Naive thymus-derived CD4-positive, alpha-beta T cell (primary cell): ENCODE measurements at regions of chr2 and their contacts with region 1.

Region 1: GRCh38 chr2:19347619-19348562 is 10.5 kb downstream of the OSR1 start:
- DNase-seq: peak; percentile 97 to 100 (median 99)
- ATAC-seq: peak; percentile 94
- H3K4me3 ChIP-seq: peak overlapping the region; percentile 85
- H3K4me3 Mint-ChIP-seq: peak overlapping the region; percentile 90 to 99 (median 96)
- H3K27ac ChIP-seq: peak overlapping the region; percentile 90
- H3K27ac Mint-ChIP-seq: peak overlapping the region; percentile 92 to 100 (median 98)
- H3K4me1 ChIP-seq: peaks cover 11 to 22% of the 10 kb centered on the region in 2 donors
- H3K4me1 Mint-ChIP-seq: peaks cover 19 to 45% (median 34%) of the 10 kb centered on the region in 7 donors
- H3K27me3 ChIP-seq: peaks cover 7 to 25% of the 10 kb centered on the region in 2 donors
- H3K27me3 Mint-ChIP-seq: peaks cover 29 to 41% (median 33%) of the 10 kb centered on the region in 5 donors

Region 2: DNA sequence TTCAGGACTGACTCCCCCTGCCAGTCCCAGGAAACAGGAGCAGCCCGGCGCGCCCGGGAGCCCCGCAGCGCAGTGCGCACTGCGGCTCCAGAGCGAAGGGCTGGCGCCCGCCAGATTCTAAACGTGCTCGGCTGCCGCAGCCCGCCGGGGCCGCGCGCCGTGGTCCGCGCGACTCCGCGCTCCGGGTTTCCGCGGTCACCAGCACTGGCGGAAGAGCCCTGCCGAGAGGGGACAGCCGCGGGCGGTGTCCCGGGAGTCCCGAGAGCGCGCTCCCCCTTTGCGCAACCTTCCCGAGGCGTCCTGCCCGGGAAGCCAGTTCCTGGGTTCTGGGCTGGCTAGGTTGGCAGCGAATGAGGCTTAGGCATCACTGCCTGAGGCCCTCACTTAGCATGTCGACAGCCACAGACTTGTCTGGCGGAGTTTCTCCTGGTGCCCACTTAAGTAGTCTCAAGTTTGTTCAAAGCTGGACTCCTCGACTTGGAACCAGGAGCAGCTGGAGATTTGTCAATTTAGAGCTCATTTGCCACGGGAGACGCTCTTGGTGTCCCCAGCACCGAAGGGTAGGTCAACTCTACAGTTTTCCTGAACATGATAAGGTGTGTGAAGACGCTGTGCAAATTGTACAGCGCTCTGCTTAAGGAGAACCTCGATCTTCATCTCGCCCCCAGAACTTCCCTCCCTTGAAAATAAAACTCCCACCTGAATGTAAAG is 1808.9 kb before region 1 on chr2:
- CTCF ChIA-PET with region 1: no interaction called
- POLR2A ChIA-PET with region 1: no interaction called
- intact Hi-C with region 1: loop called in 1 of 2 experiments (anchors 10 kb)
- DNase-seq: no peak
- ATAC-seq: no peak
- H3K4me3 ChIP-seq: no peak overlapping the region
- H3K4me3 Mint-ChIP-seq: no peak overlapping the region
- H3K27ac ChIP-seq: no peak overlapping the region
- H3K27ac Mint-ChIP-seq: no peak overlapping the region
- H3K4me1 ChIP-seq: no peaks in the 10 kb centered on the region
- H3K4me1 Mint-ChIP-seq: peaks cover 0 to 12% (median 4%) of the 10 kb centered on the region in 7 donors
- H3K27me3 ChIP-seq: peaks cover 0 to 6% of the 10 kb centered on the region in 2 donors
- H3K27me3 Mint-ChIP-seq: peaks cover 67 to 76% (median 75%) of the 10 kb centered on the region in 5 donors

Region 3: GRCh38 chr2:19331450-19331849 is 16.4 kb before region 1 on chr2:
- CTCF ChIA-PET with region 1: no interaction called
- POLR2A ChIA-PET with region 1: no interaction called
- intact Hi-C with region 1: no loop called
- DNase-seq: no peak
- ATAC-seq: no peak
- H3K4me3 ChIP-seq: no peak overlapping the region
- H3K4me3 Mint-ChIP-seq: no peak overlapping the region
- H3K27ac ChIP-seq: no peak overlapping the region
- H3K27ac Mint-ChIP-seq: no peak overlapping the region
- H3K4me1 ChIP-seq: no peaks in the 10 kb centered on the region
- H3K4me1 Mint-ChIP-seq: no peaks in the 10 kb centered on the region
- H3K27me3 ChIP-seq: no peaks in the 10 kb centered on the region
- H3K27me3 Mint-ChIP-seq: peaks cover 0 to 4% (median 0%) of the 10 kb centered on the region in 5 donors

Region 4: DNA sequence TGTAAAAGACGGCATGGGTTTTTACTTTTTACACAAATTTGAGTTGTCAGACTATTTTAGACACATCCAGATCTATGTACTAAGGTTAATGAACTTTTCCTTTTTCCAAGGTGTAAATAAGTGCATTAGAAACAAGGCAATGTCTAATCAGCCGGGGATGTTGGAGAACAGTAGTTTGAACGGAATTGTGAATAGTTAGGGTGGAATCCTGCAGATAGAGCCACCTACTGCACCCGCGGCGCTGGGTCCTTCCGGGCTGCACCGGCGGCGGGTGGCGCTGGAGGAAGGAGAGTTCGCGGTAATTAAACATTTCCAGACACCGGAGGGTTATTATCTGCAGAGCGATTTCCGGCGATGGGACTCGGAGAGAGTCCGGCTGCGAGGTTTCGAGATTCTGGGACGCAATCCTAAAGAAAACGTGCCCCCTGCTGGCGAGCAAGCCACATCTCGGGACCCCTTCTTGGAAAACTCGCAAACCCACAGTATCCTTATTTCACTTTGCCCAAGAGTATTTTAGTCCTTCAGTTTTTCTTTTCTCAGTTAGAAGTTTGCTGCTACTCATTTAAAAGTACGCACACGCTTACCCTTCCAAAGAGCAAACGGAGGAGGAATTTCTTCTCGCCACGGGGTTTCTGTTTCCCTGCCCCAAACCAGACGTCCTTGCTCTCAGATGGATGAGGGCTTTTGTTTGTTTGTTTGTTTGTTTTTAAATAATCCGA is 15.0 kb after region 1 on chr2:
- CTCF ChIA-PET with region 1: interaction called, 5 read pairs
- POLR2A ChIA-PET with region 1: interaction called, 27 read pairs
- intact Hi-C with region 1: loop called (anchors 1 kb)
- DNase-seq: peak in 3 of 9 donors; percentile 41 to 46 (median 44)
- ATAC-seq: peak; percentile 38
- H3K4me3 ChIP-seq: peak overlapping the region; percentile 79
- H3K4me3 Mint-ChIP-seq: peak overlapping the region; percentile 88 to 99 (median 94)
- H3K27ac ChIP-seq: no peak overlapping the region
- H3K27ac Mint-ChIP-seq: peak overlapping the region in 8 of 9 donors; percentile 40 to 90 (median 80)
- H3K4me1 ChIP-seq: peaks cover 7 to 20% of the 10 kb centered on the region in 2 donors
- H3K4me1 Mint-ChIP-seq: peaks cover 19 to 40% (median 35%) of the 10 kb centered on the region in 7 donors
- H3K27me3 ChIP-seq: peaks cover 19 to 30% of the 10 kb centered on the region in 2 donors
- H3K27me3 Mint-ChIP-seq: peaks cover 39 to 97% (median 43%) of the 10 kb centered on the region in 5 donors

Region 5: DNA sequence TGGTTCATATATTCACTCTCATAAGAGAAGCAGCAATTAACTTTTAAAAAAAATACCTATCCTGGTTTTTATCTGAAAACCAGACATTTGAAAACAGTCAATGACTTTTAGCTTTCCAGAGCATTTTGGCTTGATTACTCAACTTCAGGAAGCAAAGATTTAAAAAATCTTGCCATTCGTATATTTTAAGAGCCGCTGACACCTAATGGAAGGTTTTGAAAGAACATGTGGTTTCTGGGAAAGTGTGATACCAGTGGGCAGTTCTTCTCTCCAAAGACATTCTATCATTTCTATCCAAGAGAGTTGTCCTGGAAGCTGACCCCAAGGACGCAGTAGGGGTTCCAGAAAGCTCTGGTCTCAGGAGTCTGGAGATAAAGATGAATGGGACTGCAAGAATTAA is 319.2 kb after region 1 on chr2:
- CTCF ChIA-PET with region 1: no interaction called
- POLR2A ChIA-PET with region 1: no interaction called
- intact Hi-C with region 1: loop called in 1 of 2 experiments (anchors 1 kb)
- DNase-seq: no peak
- ATAC-seq: no peak
- H3K4me3 ChIP-seq: no peak overlapping the region
- H3K4me3 Mint-ChIP-seq: no peak overlapping the region
- H3K27ac ChIP-seq: no peak overlapping the region
- H3K27ac Mint-ChIP-seq: no peak overlapping the region
- H3K4me1 ChIP-seq: no peaks in the 10 kb centered on the region
- H3K4me1 Mint-ChIP-seq: no peaks in the 10 kb centered on the region
- H3K27me3 ChIP-seq: no peaks in the 10 kb centered on the region
- H3K27me3 Mint-ChIP-seq: peaks cover 0 to 32% (median 17%) of the 10 kb centered on the region in 5 donors

Region 6: GRCh38 chr2:19901442-19902215 is 553.7 kb after region 1 on chr2 and contains the start of gene TTC32:
- CTCF ChIA-PET with region 1: no interaction called
- POLR2A ChIA-PET with region 1: interaction called, 8 read pairs
- intact Hi-C with region 1: loop called (anchors 1 kb)
- DNase-seq: peak; percentile 90 to 98 (median 96)
- ATAC-seq: peak; percentile 91
- H3K4me3 ChIP-seq: peak within 1 kb of the TSS; percentile 95
- H3K4me3 Mint-ChIP-seq: peak within 1 kb of the TSS; percentile 84 to 99 (median 96)
- H3K27ac ChIP-seq: peak within 1 kb of the TSS; percentile 83
- H3K27ac Mint-ChIP-seq: peak within 1 kb of the TSS; percentile 93 to 100 (median 99)
- H3K4me1 ChIP-seq: peaks cover 15 to 23% of the 10 kb centered on the region in 2 donors
- H3K4me1 Mint-ChIP-seq: peaks cover 24 to 35% (median 31%) of the 10 kb centered on the region in 7 donors
- H3K27me3 ChIP-seq: no peaks in the 10 kb centered on the region
- H3K27me3 Mint-ChIP-seq: peaks cover 8 to 19% (median 13%) of the 10 kb centered on the region in 5 donors
- total RNA-seq, gene TTC32: 23.1 to 58.0 (median 44.9) TPM

Region 7: GRCh38 chr2:20097879-20098714 is 750.2 kb after region 1 on chr2:
- CTCF ChIA-PET with region 1: no interaction called
- POLR2A ChIA-PET with region 1: no interaction called
- intact Hi-C with region 1: loop called in 1 of 2 experiments (anchors 5 kb)
- DNase-seq: peak; percentile 58 to 73 (median 67)
- ATAC-seq: peak; percentile 94
- H3K4me3 ChIP-seq: no peak overlapping the region
- H3K4me3 Mint-ChIP-seq: no peak overlapping the region
- H3K27ac ChIP-seq: no peak overlapping the region
- H3K27ac Mint-ChIP-seq: no peak overlapping the region
- H3K4me1 ChIP-seq: no peaks in the 10 kb centered on the region
- H3K4me1 Mint-ChIP-seq: peaks cover 0 to 4% (median 0%) of the 10 kb centered on the region in 7 donors
- H3K27me3 ChIP-seq: no peaks in the 10 kb centered on the region
- H3K27me3 Mint-ChIP-seq: peaks cover 12 to 21% (median 13%) of the 10 kb centered on the region in 5 donors

Region 8: DNA sequence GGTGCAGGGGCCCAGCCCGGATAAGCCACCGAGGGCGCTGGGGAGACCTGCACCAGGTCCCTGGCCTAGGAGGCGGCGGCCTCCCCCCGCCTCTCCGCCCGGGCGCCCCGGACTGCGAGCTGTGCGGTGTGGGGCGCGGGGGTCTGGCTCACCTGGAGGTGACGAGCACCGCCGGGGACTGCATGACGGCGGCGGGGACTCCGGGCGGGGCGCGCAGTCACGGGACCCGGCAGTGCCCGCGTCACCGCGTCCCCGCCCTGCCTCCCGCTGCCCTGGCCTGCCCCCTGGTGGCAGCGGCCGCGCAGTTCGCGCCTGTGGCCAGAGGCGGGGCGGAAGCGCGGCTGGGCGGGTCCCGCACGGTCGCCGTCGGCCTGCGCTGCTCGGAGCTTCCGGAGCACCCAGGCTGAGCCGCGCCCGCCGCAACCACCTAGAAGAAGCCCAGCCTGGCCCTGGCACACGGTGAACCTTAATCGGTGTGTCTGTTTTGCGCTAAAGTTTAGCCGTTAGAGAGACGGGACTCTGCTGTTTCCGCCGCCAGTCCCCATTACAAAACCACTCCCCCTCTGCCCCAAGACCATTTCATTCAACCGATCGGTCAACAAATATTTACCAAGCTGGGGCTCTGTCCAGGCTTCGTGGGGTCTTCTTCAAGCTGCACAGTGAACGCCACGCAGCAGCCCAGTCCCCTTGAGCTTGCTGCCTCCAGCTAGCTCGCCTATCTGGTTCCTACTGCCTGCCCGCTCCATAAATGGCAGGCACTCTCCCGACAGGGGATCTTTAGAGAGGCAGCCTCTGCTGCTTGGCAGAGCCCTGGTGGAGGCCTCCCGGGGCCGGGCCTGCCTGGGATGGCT is 1303.2 kb after region 1 on chr2 and contains the start of gene HS1BP3:
- CTCF ChIA-PET with region 1: no interaction called
- POLR2A ChIA-PET with region 1: no interaction called
- intact Hi-C with region 1: loop called (anchors 2 to 5 kb)
- DNase-seq: peak; percentile 87 to 99 (median 94)
- ATAC-seq: peak; percentile 97
- H3K4me3 ChIP-seq: peak within 1 kb of the TSS; percentile 80
- H3K4me3 Mint-ChIP-seq: peak within 1 kb of the TSS; percentile 86 to 95 (median 90)
- H3K27ac ChIP-seq: peak within 1 kb of the TSS; percentile 86
- H3K27ac Mint-ChIP-seq: peak within 1 kb of the TSS; percentile 90 to 99 (median 96)
- H3K4me1 ChIP-seq: peaks cover 16 to 20% of the 10 kb centered on the region in 2 donors
- H3K4me1 Mint-ChIP-seq: peaks cover 22 to 42% (median 39%) of the 10 kb centered on the region in 7 donors
- H3K27me3 ChIP-seq: no peaks in the 10 kb centered on the region
- H3K27me3 Mint-ChIP-seq: peaks cover 0 to 11% (median 0%) of the 10 kb centered on the region in 5 donors
- total RNA-seq, gene HS1BP3: 12.0 to 19.0 (median 18.3) TPM